ENCODE measurements at regions of chr19 and their contacts with region 1.

Region 1: GRCh38 chr19:19663256-19664038 is at the start of gene ATP13A1:
- DNase-seq: peak; percentile 98
- H3K4me3 ChIP-seq: peak within 1 kb of the TSS; percentile 71 to 97 (median 89)
- H3K27ac ChIP-seq: peak within 1 kb of the TSS; percentile 87 to 92 (median 91)
- H3K4me1 ChIP-seq: peaks cover 0 to 33% (median 27%) of the 10 kb centered on the region in 4 donors
- H3K27me3 ChIP-seq: no peaks in the 10 kb centered on the region
- CTCF ChIP-seq: no peak
- EP300 ChIP-seq: no peak
- POLR2A ChIP-seq: peak; percentile 31 to 40
- total RNA-seq, gene ATP13A1: 55.5 to 145 (median 102) TPM

Region 2: GRCh38 chr19:19063183-19064097 is 600.0 kb before region 1 on chr19 and contains the start of gene SLC25A42:
- intact Hi-C with region 1: loop called (anchors 10 kb)
- DNase-seq: peak; percentile 100
- H3K4me3 ChIP-seq: peak within 1 kb of the TSS; percentile 64 to 93 (median 92)
- H3K27ac ChIP-seq: peak within 1 kb of the TSS; percentile 79 to 90 (median 88)
- H3K4me1 ChIP-seq: peaks cover 0 to 28% (median 21%) of the 10 kb centered on the region in 4 donors
- H3K27me3 ChIP-seq: no peaks in the 10 kb centered on the region
- CTCF ChIP-seq: no peak
- EP300 ChIP-seq: no peak
- POLR2A ChIP-seq: peak in 1 of 2 donors; percentile 20
- total RNA-seq, gene SLC25A42: 6.3 to 8.2 (median 7.3) TPM

Region 3: GRCh38 chr19:19531951-19532805 is 131.3 kb before region 1 on chr19:
- intact Hi-C with region 1: loop called (anchors 5 kb)
- DNase-seq: peak; percentile 88
- H3K4me3 ChIP-seq: no peak overlapping the region
- H3K27ac ChIP-seq: no peak overlapping the region
- H3K4me1 ChIP-seq: peaks cover 0 to 24% (median 20%) of the 10 kb centered on the region in 4 donors
- H3K27me3 ChIP-seq: peaks cover 0 to 1% (median 0%) of the 10 kb centered on the region in 3 donors
- CTCF ChIP-seq: peak; percentile 75 to 99 (median 89)
- EP300 ChIP-seq: no peak
- POLR2A ChIP-seq: no peak

Region 4: DNA sequence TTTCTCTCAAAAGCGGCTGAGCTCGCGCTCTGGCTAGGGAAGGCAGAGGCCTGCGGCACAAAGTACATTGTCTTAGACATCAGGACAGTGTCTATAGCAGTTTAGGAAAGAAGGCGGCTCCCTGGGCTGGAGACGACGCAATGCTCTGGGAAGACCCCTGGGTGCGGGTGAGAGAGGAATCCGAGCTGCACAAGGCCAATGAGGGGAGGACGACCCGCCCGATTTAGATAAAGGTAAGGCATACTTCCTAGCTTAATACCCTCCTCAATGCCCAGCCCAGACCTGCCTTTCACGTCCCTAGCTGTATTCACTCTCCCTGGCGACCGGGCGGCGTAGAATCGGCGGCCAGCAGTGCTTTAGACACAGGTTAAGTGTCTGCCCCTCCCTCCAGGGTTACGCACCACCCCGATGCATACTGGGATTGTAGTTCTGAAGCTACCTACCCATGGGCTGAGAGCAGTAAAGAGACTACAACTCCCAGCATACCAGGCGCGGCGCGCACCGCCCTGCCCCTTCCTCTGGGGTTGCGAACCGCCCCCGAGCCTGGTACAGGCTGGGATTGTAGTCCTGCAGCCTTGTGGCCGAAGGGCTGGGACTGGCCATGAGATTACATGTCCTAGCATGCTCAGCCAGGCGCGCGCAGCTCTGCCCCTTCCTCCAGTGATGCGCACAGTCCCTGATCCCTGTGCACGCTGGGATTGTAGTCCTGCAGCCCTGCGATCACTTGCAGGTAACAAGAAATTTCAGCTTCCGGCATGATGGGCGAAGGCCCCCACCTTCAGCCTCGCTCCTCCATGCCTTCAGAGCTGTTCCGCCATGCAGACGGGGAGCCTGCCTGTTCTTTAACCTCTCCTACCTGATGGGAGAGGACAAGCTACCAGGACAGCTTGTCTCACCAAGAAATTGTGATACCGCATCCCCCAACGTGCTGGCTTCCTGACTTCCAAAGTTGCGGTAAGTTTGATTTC is 112.9 kb after region 1 on chr19:
- intact Hi-C with region 1: loop called (anchors 2 kb)
- DNase-seq: peak; percentile 99
- H3K4me3 ChIP-seq: peak overlapping the region; percentile 56 to 75 (median 70)
- H3K27ac ChIP-seq: peak overlapping the region; percentile 70 to 79 (median 76)
- H3K4me1 ChIP-seq: peaks cover 0 to 24% (median 18%) of the 10 kb centered on the region in 4 donors
- H3K27me3 ChIP-seq: no peaks in the 10 kb centered on the region
- CTCF ChIP-seq: no peak
- EP300 ChIP-seq: no peak
- POLR2A ChIP-seq: no peak

Region 5: GRCh38 chr19:19900729-19901444 is 237.4 kb after region 1 on chr19 and contains the start of gene ZNF93:
- intact Hi-C with region 1: loop called (anchors 5 kb)
- DNase-seq: peak; percentile 98
- H3K4me3 ChIP-seq: peak within 1 kb of the TSS; percentile 54 to 85 (median 69)
- H3K27ac ChIP-seq: peak within 1 kb of the TSS; percentile 83 to 99 (median 88)
- H3K4me1 ChIP-seq: peaks cover 0 to 23% (median 6%) of the 10 kb centered on the region in 4 donors
- H3K27me3 ChIP-seq: no peaks in the 10 kb centered on the region
- CTCF ChIP-seq: no peak
- EP300 ChIP-seq: no peak
- POLR2A ChIP-seq: peak; percentile 27 to 63
- total RNA-seq, gene ZNF93: 5.1 to 14.4 (median 6.7) TPM